A673 (cell line): ENCODE measurements at regions of chr20 and their contacts with region 1.

Region 1: DNA sequence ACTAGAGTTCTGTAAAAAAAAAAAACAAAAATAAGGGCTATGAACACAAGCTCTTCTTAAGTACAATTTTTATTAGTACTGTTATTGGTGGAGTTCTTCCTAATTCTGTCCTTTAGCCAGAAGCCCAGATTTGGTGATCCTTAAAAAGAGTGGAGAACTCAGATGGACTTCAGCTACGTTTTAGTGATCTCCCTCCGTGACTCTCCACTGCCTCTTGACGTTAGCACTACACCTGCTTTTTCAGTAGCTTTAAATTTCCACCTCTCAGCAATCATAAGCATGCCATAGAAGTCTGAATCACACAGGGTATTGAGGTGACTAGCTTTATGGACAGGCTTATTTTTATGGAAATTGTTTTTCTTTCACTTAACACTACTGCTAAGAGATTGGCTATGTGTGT is 17.7 kb downstream of the DHX35 start:
- DNase-seq: no peak
- H3K4me3 ChIP-seq: no peak overlapping the region
- H3K27ac ChIP-seq: no peak overlapping the region
- H3K4me1 ChIP-seq: peaks cover 10% of the 10 kb centered on the region
- H3K27me3 ChIP-seq: no peaks in the 10 kb centered on the region
- CTCF ChIP-seq: no peak

Region 2: GRCh38 chr20:38485041-38485440 is 494.8 kb before region 1 on chr20:
- CTCF ChIA-PET with region 1: no interaction called
- POLR2A ChIA-PET with region 1: interaction called, 10 read pairs
- intact Hi-C with region 1: no loop called
- DNase-seq: no peak
- H3K4me3 ChIP-seq: no peak overlapping the region
- H3K27ac ChIP-seq: no peak overlapping the region
- H3K4me1 ChIP-seq: no peaks in the 10 kb centered on the region
- H3K27me3 ChIP-seq: no peaks in the 10 kb centered on the region
- CTCF ChIP-seq: no peak

Region 3: DNA sequence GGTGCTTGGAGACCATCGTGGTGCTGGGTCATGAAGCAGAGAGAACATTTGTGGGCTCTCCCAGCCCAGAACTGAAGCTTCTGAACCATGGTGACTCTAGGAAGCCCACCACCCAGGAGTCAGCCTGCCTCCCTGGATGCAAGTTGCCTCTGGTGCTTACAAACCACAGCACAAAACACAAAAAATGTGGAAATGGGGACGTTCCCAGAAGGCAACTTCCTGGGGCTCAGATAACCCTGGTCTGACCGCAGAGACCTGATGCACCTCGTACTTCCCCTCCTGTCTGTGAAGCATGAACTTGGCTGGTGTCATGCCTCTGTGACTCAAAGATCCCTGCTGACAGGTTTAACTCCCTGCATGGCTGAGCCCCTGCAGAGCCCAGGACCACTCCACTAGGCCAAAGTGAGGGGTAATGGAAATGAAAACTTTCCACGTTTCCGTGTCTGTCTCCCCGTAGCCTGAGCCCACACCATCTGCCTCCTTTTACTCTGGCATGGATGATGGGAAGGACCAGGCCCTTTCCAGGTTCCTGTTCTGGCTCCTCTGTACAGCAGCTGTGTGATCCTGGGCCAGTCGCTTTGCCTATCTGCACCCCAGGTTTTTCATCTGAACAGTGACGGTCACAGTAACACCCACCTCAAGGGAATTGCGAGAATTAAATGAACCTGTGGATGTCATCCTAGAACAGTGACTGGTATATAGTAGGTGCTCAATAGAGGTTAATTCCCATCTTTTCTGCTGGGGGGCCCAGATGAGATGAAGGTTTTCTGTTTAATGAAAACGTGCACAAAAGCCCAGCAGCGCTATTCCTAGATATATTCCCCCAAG is 116.6 kb before region 1 on chr20:
- CTCF ChIA-PET with region 1: no interaction called
- POLR2A ChIA-PET with region 1: no interaction called
- intact Hi-C with region 1: no loop called
- DNase-seq: no peak
- H3K4me3 ChIP-seq: no peak overlapping the region
- H3K27ac ChIP-seq: no peak overlapping the region
- H3K4me1 ChIP-seq: no peaks in the 10 kb centered on the region
- H3K27me3 ChIP-seq: peaks cover 9% of the 10 kb centered on the region
- CTCF ChIP-seq: no peak

Region 4: DNA sequence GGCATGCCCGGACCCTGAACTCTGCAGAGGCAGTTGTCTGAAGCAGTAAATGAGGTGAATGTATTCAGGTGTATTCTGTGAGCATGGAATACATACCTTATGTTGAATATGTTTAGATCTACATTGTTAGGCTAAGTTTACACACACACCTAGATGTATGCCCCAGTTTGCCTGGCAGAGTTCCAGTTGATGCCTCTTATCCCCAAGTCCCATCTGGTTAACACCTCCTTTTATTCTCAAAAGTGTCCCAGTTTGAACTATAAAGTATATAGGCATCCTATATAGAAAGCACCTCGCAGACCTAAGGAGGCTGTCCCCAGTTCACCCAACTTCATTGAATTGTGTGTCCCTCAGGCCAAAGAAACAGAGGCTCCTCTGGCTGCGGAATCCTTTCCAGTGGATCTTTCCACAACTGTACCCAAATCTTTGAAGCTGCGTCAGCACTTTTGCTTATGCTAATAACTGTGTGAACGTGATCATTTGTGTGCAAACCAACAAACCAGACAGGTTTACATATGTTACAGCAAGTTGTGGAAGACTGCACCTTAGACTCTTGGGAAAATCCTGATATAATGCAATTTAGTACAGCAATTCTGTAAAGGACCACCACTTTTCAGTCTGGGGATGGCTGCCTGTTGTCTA is 22.5 kb before region 1 on chr20:
- CTCF ChIA-PET with region 1: no interaction called
- POLR2A ChIA-PET with region 1: interaction called, 11 read pairs
- intact Hi-C with region 1: no loop called
- DNase-seq: no peak
- H3K4me3 ChIP-seq: no peak overlapping the region
- H3K27ac ChIP-seq: no peak overlapping the region
- H3K4me1 ChIP-seq: peaks cover 6% of the 10 kb centered on the region
- H3K27me3 ChIP-seq: no peaks in the 10 kb centered on the region
- CTCF ChIP-seq: no peak